Naive thymus-derived CD8-positive, alpha-beta T cell (primary cell): ENCODE measurements at regions of chr3 and their contacts with region 1.

Region 1: DNA sequence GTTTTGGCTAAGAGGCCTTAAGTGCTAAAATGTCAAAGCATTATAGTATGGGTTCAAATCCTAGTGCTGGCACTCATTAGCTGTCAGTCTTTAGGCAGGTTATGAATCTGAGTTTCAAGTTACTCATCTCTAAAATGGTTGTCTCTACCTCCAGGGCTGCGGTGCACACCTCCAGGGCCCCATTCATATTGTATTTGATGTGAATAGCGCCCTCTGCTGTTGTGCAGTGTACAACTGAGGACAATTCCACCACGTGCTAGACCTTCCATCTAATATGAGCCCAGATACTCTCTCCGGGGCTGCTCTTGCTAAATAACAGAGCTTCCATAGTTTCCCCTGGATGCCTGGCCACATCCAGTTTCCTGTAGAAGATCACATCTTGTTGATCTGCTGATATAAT is 54.3 kb downstream of the OXNAD1 start:
- DNase-seq: peak; percentile 50 to 89 (median 72)
- ATAC-seq: peak; percentile 69 to 84
- H3K4me3 Mint-ChIP-seq: peak overlapping the region; percentile 13 to 81 (median 56)
- H3K27ac Mint-ChIP-seq: peak overlapping the region; percentile 92 to 99 (median 98)
- H3K4me1 Mint-ChIP-seq: peaks cover 36 to 97% (median 81%) of the 10 kb centered on the region in 4 donors
- H3K27me3 Mint-ChIP-seq: no peaks in the 10 kb centered on the region

Region 2: DNA sequence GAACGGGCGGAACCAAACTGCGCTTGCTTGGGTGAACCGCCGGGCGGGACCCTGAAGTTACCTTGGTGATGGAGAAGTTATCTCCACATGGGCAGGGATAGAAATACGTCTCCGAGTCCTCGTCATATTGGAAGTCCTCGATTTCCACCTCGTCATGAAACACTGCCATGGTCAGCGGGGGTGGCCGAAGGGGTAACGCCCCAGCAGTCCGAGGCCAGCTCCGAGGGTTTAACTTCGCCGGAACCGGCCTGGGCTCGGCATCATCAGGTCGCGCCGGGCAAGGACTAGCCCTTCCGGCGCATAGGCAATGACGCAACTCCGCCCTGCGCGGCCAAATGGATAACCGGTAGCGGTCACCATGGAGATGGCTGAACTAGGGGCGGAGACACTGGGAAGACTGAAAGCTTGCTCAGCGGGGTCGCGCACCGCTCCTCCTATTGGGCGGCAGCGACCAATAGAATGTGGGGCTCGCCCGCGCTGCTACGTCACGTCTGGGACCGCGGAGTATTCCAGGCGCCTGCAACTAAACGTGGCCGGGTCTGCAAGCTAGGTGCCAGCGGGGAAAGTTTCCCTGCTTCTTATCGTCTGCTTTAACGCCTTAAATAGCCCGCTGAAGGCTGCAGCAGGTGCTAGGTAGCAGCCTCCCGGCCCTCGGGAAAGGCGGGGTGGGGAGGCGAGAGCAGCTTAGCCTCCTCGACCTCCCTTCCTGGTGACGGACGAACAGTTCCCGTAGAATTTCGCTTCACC is 54.4 kb before region 1 on chr3 and contains the starts of genes DPH3 and OXNAD1:
- POLR2A ChIA-PET with region 1: interaction called, 15 read pairs
- DNase-seq: peak; percentile 95 to 100 (median 99)
- ATAC-seq: peak; percentile 93
- H3K4me3 Mint-ChIP-seq: peak within 1 kb of the TSS; percentile 90 to 100 (median 100)
- H3K27ac Mint-ChIP-seq: peak within 1 kb of the TSS; percentile 96 to 100 (median 99)
- H3K4me1 Mint-ChIP-seq: peaks cover 16 to 38% (median 30%) of the 10 kb centered on the region in 4 donors
- H3K27me3 Mint-ChIP-seq: peaks cover 0 to 3% (median 0%) of the 10 kb centered on the region in 5 donors
- polyA plus RNA-seq, gene DPH3: 16.7 to 20.9 (median 18.6) TPM
- polyA plus RNA-seq, gene OXNAD1: 106 to 190 (median 168) TPM

Region 3: GRCh38 chr3:16300881-16301359 is 18.4 kb before region 1 on chr3:
- POLR2A ChIA-PET with region 1: interaction called, 304 read pairs
- DNase-seq: peak in 9 of 10 donors; percentile 49 to 87 (median 75)
- ATAC-seq: peak; percentile 68 to 82
- H3K4me3 Mint-ChIP-seq: peak overlapping the region; percentile 84 to 100 (median 93)
- H3K27ac Mint-ChIP-seq: peak overlapping the region; percentile 86 to 99 (median 96)
- H3K4me1 Mint-ChIP-seq: peaks cover 52 to 99% (median 96%) of the 10 kb centered on the region in 4 donors
- H3K27me3 Mint-ChIP-seq: no peaks in the 10 kb centered on the region